ENCODE measurements at regions of chr15 and their contacts with region 1.

Region 1: GRCh38 chr15:42650208-42651066 is 75.0 kb downstream of the STARD9 start:
- DNase-seq: peak in 9 of 10 donors; percentile 26 to 75 (median 56)
- H3K4me3 ChIP-seq: no peak overlapping the region
- H3K27ac ChIP-seq: peak overlapping the region in 2 of 59 donors; percentile 15 to 18
- H3K27me3 ChIP-seq: no peaks in the 10 kb centered on the region
- CTCF ChIP-seq: peak; percentile 33 to 89 (median 80)

Region 2: DNA sequence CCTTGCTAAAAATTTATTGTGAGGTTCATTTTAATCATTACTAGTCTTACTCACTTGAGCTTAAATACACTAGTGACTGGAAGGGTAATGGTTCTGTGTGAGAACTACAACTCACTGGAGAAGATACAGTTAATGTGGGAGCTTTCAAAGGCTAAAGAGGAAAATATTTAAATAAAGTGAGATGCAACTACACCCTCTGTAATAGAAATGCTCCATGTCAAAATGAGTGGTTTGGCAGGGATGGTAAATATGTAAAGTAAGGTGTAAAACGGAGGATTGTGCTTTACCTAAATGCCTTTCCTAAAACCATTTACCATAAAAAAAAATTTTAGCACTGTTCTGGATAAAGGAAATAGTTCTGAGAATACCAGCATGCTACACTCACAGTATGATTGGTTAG is 117.2 kb before region 1 on chr15:
- intact Hi-C with region 1: loop called in 1 of 2 experiments (anchors 10 kb)
- DNase-seq: no peak
- H3K4me3 ChIP-seq: no peak overlapping the region
- H3K27ac ChIP-seq: no peak overlapping the region
- H3K27me3 ChIP-seq: no peaks in the 10 kb centered on the region
- CTCF ChIP-seq: no peak

Region 3: DNA sequence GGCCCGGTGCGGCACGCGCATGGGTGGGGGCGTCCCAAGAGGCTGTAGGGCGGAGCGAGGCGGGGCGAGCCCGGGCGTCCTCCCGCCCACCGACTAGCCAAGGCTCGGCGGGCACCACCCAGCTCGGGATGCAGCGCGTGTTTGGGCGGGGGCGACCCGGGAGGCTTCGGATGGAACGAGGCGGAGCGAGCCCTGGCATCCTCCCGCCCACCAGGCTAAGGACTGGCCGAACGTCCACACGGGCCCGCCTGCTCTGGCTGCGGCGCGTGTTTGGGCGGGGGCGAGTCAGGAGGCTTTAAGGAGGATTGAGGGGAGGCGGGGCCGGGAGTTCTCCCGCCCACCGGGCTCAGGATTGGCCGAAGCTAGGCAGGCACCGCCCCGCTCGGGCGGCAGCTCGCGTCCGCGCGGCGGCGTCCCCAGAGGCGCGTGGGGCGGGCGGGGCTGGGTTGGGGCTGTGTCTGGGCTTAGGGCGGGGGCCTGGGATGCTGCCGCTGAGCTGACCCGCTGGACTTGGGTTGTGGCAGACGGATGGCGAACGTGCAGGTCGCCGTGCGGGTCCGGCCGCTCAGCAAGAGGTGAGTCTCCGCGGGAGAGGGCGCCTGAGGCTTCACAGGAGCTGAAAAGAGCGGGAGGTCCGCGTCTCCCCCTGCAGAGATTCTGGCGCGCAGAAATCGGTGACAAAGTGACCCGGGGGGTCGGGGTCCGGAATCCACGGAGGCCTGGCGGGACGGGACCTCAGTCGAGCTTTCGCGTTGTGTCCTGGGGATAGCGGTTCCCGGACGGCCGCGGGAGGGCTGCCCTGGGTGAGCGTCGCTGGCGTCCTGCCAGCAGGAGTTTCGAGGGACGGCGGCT is 75.0 kb before region 1 on chr15 and contains the start of gene STARD9:
- intact Hi-C with region 1: loop called (anchors 2 to 10 kb)
- DNase-seq: peak; percentile 97 to 99 (median 98)
- H3K4me3 ChIP-seq: peak within 1 kb of the TSS; percentile 58 to 99 (median 91)
- H3K27ac ChIP-seq: peak within 1 kb of the TSS; percentile 6 to 95 (median 86)
- H3K27me3 ChIP-seq: no peaks in the 10 kb centered on the region
- CTCF ChIP-seq: peak in 23 of 56 donors; percentile 5 to 50 (median 28)
- total RNA-seq, gene STARD9: 14.7 to 62.1 (median 30.1) TPM